Left cardiac atrium (tissue), 4 donors: ENCODE measurements at regions of chr15 and their contacts with region 1.

Region 1: GRCh38 chr15:60052796-60053195 is 48.7 kb downstream of the FOXB1 start:
- DNase-seq: no peak
- ATAC-seq: no peak

Region 2: DNA sequence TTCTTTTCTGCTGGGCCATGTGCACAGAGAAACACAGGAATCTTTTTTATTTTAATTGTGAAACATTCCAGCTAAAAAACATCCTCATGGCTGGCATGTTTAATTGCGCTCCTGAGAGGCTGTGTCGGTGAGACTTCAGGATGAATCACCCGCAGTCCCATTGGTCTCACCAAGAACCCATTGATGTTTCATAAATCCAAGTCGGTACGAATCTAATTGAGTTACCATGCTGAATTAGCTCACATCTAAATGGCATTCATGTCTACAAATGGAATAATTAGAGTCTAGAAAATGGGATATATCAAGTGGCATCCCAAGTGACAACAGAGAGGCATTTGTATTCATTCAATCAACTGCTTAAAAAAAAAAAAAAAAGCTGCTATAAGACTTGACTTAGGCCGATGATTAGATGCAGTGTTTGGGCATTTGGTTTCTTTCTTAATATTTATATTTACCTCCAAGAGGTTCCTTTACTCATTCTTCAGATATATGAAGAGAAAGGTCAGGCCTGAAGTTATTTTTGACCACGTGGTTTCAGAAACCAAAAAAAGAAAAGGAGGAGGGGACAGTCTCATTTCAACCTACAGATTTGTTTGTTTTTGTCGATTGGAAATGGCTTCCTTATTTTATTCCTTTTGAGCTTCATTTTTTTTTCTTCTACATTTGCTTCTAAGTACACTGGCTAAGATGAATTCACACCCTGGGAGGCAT is 127.8 kb before region 1 on chr15:
- intact Hi-C with region 1: loop called in 1 of 2 experiments (anchors 10 kb)
- DNase-seq: no peak
- ATAC-seq: no peak